ENCODE measurements at regions of chr13 and their contacts with region 1.

Region 1: GRCh38 chr13:71605744-71606143 is 261.3 kb downstream of the DACH1 start:
- DNase-seq: no peak
- H3K4me3 ChIP-seq: no peak overlapping the region
- H3K27ac ChIP-seq: no peak overlapping the region
- H3K4me1 ChIP-seq: no peaks in the 10 kb centered on the region
- H3K27me3 ChIP-seq: no peaks in the 10 kb centered on the region
- CTCF ChIP-seq: no peak
- POLR2A ChIP-seq: no peak

Region 2: GRCh38 chr13:70769817-70770216 is 835.9 kb before region 1 on chr13:
- intact Hi-C with region 1: loop called (anchors 10 kb)
- DNase-seq: no peak
- H3K4me3 ChIP-seq: no peak overlapping the region
- H3K27ac ChIP-seq: no peak overlapping the region
- H3K4me1 ChIP-seq: no peaks in the 10 kb centered on the region
- H3K27me3 ChIP-seq: no peaks in the 10 kb centered on the region
- CTCF ChIP-seq: no peak
- POLR2A ChIP-seq: no peak

Region 3: GRCh38 chr13:71039440-71039839 is 566.3 kb before region 1 on chr13:
- intact Hi-C with region 1: no loop called
- DNase-seq: no peak
- H3K4me3 ChIP-seq: no peak overlapping the region
- H3K27ac ChIP-seq: no peak overlapping the region
- H3K4me1 ChIP-seq: no peaks in the 10 kb centered on the region
- H3K27me3 ChIP-seq: no peaks in the 10 kb centered on the region
- CTCF ChIP-seq: no peak
- POLR2A ChIP-seq: no peak

Region 4: GRCh38 chr13:71358218-71358617 is 247.5 kb before region 1 on chr13:
- intact Hi-C with region 1: no loop called
- DNase-seq: no peak
- H3K4me3 ChIP-seq: no peak overlapping the region
- H3K27ac ChIP-seq: no peak overlapping the region
- H3K4me1 ChIP-seq: no peaks in the 10 kb centered on the region
- H3K27me3 ChIP-seq: no peaks in the 10 kb centered on the region
- CTCF ChIP-seq: no peak
- POLR2A ChIP-seq: no peak